SK-N-SH (cell line): ENCODE measurements at regions of chr17 and their contacts with region 1.

Region 1: DNA sequence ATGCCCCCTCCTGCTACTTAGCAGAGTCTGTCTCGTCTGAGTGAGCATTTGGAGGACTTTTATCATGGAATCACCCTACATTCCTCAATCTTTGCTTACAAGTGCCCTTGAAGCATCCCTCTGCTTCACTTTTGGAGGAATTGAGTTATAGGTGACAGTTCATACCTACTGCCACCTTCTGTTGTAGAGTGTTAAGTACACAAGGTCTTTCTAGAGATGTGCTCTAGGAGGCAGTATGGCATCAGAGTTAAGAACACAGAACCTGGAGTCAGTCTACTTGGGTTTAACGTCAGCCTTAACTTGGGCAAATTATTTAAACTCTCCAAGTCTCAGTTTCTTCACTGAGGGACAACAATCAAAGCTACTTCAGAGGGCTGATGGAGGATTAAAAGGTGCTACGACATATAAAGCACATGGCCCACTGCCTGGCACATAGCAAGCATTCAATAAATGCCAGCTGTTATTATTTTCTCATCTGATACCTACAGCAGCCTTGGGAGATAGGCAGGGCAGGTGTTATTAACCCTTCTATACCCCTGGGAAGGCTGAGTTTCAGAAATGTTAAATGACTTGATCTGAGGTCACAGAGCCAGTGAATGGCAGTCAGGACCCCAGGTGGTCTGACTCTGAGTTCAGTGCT is 62.2 kb downstream of the UTP18 start:
- DNase-seq: peak; percentile 52
- H3K4me3 ChIP-seq: no peak overlapping the region
- H3K27ac ChIP-seq: no peak overlapping the region
- H3K4me1 ChIP-seq: no peaks in the 10 kb centered on the region
- H3K27me3 ChIP-seq: no peaks in the 10 kb centered on the region
- CTCF ChIP-seq: peak; percentile 51
- EP300 ChIP-seq: no peak
- RAD21 ChIP-seq: peak; percentile 87

Region 2: GRCh38 chr17:51335883-51336822 is 13.6 kb after region 1 on chr17:
- CTCF ChIA-PET with region 1: interaction called, 14 read pairs
- POLR2A ChIA-PET with region 1: no interaction called
- DNase-seq: no peak
- H3K4me3 ChIP-seq: no peak overlapping the region
- H3K27ac ChIP-seq: no peak overlapping the region
- H3K4me1 ChIP-seq: peaks cover 0 to 5% of the 10 kb centered on the region in 2 experiments; a peak in 1 of 4 replicates
- H3K27me3 ChIP-seq: peaks cover 7% of the 10 kb centered on the region; the same call in 1 of the 2 replicates
- CTCF ChIP-seq: no peak
- EP300 ChIP-seq: no peak
- RAD21 ChIP-seq: no peak

Region 3: DNA sequence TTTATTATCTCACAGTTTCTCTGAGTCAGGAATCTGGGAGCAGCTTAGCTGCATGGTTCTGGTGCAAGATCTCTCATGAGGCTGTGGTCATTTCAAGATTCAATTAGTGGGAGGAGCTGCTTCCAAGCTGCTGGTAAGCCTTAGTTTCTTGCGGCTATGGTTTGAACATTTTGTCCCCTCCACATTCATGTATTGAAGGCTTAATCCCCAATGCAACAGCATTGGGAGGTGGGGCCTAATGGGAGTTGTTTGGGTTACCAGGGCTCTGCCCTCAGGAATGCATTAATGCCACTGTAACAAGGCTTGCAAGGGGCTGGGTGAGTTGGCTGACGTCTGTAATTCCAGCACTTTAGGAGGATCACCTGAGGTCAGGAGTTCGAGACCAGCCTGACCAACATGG is 210.7 kb after region 1 on chr17:
- CTCF ChIA-PET with region 1: interaction called, 10 read pairs
- POLR2A ChIA-PET with region 1: no interaction called
- DNase-seq: no peak
- H3K4me3 ChIP-seq: no peak overlapping the region
- H3K27ac ChIP-seq: no peak overlapping the region
- H3K4me1 ChIP-seq: peaks cover 0 to under 1% of the 10 kb centered on the region in 2 experiments; a peak in 2 of 4 replicates
- H3K27me3 ChIP-seq: no peaks in the 10 kb centered on the region
- CTCF ChIP-seq: no peak
- EP300 ChIP-seq: no peak
- RAD21 ChIP-seq: no peak

Region 4: DNA sequence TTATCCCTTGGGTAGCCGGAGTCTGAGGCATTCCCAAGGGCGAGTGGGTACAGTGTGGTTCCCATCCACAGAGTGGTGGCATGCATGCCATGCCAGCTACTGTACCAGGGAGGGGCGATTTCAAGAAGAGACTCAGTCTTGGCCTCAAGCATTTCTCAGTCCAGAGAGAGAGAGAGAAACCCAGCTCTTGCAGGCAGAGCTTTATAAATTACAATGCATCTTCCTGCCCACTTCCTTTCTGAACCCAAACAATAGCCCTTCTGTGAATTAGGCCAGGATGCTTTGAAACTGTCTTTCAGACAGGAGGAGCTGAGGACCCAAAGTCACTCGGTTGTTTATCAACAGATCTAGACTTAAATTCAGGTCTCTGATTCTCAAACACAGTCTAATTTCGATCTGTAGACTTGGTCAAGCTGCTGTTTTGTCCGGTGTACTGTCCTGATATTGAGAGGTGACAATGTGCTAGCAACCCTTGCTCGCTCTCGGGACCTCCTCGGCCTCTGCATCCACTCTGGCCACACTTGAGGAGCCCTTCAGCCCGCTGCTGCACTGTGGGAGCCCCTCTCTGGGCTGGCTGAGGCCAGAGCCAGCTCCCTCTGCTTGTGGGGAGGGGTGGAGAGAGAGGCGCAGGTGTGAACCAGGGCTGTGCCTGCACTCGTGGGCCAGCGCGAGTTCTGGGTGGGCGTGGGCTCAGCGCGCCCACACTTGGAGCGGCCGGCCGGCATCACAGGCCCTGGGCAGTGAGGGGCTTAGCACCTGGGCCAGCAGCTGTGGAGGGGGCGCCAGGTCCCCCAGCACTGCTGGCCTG is 345.8 kb after region 1 on chr17:
- CTCF ChIA-PET with region 1: no interaction called
- POLR2A ChIA-PET with region 1: no interaction called
- DNase-seq: no peak
- H3K4me3 ChIP-seq: no peak overlapping the region
- H3K27ac ChIP-seq: no peak overlapping the region
- H3K4me1 ChIP-seq: no peaks in the 10 kb centered on the region
- H3K27me3 ChIP-seq: no peaks in the 10 kb centered on the region
- CTCF ChIP-seq: no peak
- EP300 ChIP-seq: no peak
- RAD21 ChIP-seq: no peak